ENCODE measurements at regions of chr2 and their contacts with region 1.

Region 1: DNA sequence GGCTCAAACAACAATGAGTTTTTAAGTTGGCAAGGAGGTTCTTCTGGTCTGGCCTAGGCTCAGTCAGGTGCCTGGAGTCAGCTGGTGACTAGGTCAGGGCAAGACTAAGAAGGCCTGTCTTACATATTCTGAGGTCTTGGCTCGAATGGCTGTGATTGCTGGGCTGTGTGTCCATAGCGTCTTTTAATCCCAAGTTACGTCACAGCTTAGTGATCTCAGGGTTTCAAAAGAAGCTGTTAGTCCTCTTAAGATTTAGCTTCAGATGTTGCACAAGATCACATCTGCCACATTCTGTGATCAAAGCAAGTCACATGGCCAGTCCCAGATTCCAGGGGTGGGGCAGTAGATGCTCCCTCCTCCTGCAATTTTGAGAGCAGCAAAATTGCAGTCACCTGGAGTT is 61.3 kb downstream of the PKP4 start:
- DNase-seq: peak; percentile 75 to 84
- H3K4me3 ChIP-seq: no peak overlapping the region
- H3K4me3 Mint-ChIP-seq: peak overlapping the region; percentile 35
- H3K27ac Mint-ChIP-seq: peak overlapping the region; percentile 84
- H3K4me1 ChIP-seq: peaks cover 18% of the 10 kb centered on the region
- H3K4me1 Mint-ChIP-seq: peaks cover 28% of the 10 kb centered on the region
- H3K27me3 ChIP-seq: no peaks in the 10 kb centered on the region
- H3K27me3 Mint-ChIP-seq: no peaks in the 10 kb centered on the region
- CTCF ChIP-seq: no peak

Region 2: DNA sequence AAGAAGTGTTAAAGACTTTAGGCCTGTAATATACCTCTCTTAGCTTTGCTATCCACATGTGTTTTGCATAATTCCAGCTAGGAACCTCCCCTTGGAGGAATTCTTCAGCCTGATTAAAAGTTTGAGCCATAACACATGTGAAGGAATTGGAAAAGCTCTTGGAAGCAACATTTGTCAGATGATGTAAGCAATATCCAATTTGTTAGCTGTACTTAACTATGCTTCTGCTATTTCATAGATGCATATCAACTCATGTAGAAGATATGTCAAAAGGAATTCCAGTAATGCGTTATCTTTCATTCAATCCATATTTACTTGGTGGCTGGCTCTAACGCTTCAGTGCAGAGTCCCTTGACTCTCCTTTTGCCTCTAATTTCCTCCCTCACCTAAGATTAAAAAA is 15.1 kb before region 1 on chr2:
- CTCF ChIA-PET with region 1: no interaction called
- POLR2A ChIA-PET with region 1: no interaction called
- intact Hi-C with region 1: loop called (anchors 1 kb)
- DNase-seq: no peak
- H3K4me3 ChIP-seq: no peak overlapping the region
- H3K4me3 Mint-ChIP-seq: no peak overlapping the region
- H3K27ac Mint-ChIP-seq: peak overlapping the region; percentile 64
- H3K4me1 ChIP-seq: peaks cover 44% of the 10 kb centered on the region
- H3K4me1 Mint-ChIP-seq: peaks cover 33% of the 10 kb centered on the region
- H3K27me3 ChIP-seq: no peaks in the 10 kb centered on the region
- H3K27me3 Mint-ChIP-seq: no peaks in the 10 kb centered on the region
- CTCF ChIP-seq: no peak

Region 3: GRCh38 chr2:158529379-158530259 is 11.5 kb after region 1 on chr2:
- CTCF ChIA-PET with region 1: interaction called, 6 read pairs
- POLR2A ChIA-PET with region 1: no interaction called
- intact Hi-C with region 1: loop called (anchors 1 kb)
- DNase-seq: no peak
- H3K4me3 ChIP-seq: no peak overlapping the region
- H3K4me3 Mint-ChIP-seq: no peak overlapping the region
- H3K27ac Mint-ChIP-seq: peak overlapping the region; percentile 60
- H3K4me1 ChIP-seq: no peaks in the 10 kb centered on the region
- H3K4me1 Mint-ChIP-seq: peaks cover 8% of the 10 kb centered on the region
- H3K27me3 ChIP-seq: no peaks in the 10 kb centered on the region
- H3K27me3 Mint-ChIP-seq: no peaks in the 10 kb centered on the region
- CTCF ChIP-seq: no peak

Region 4: GRCh38 chr2:158546412-158547144 is 28.5 kb after region 1 on chr2:
- CTCF ChIA-PET with region 1: no interaction called
- POLR2A ChIA-PET with region 1: no interaction called
- intact Hi-C with region 1: no loop called
- DNase-seq: no peak
- H3K4me3 ChIP-seq: no peak overlapping the region
- H3K4me3 Mint-ChIP-seq: no peak overlapping the region
- H3K27ac Mint-ChIP-seq: no peak overlapping the region
- H3K4me1 ChIP-seq: no peaks in the 10 kb centered on the region
- H3K4me1 Mint-ChIP-seq: no peaks in the 10 kb centered on the region
- H3K27me3 ChIP-seq: no peaks in the 10 kb centered on the region
- H3K27me3 Mint-ChIP-seq: no peaks in the 10 kb centered on the region
- CTCF ChIP-seq: no peak

Region 5: GRCh38 chr2:158561054-158561453 is 43.0 kb after region 1 on chr2:
- CTCF ChIA-PET with region 1: no interaction called
- POLR2A ChIA-PET with region 1: no interaction called
- intact Hi-C with region 1: loop called (anchors 2 kb)
- DNase-seq: peak in 1 of 2 experiments; percentile 56
- H3K4me3 ChIP-seq: no peak overlapping the region
- H3K4me3 Mint-ChIP-seq: peak overlapping the region; percentile 57
- H3K27ac Mint-ChIP-seq: peak overlapping the region; percentile 81
- H3K4me1 ChIP-seq: peaks cover 29% of the 10 kb centered on the region
- H3K4me1 Mint-ChIP-seq: peaks cover 20% of the 10 kb centered on the region
- H3K27me3 ChIP-seq: no peaks in the 10 kb centered on the region
- H3K27me3 Mint-ChIP-seq: no peaks in the 10 kb centered on the region
- CTCF ChIP-seq: no peak

Measured in Caco-2 (cell line).